B cell (primary cell): ENCODE measurements at regions of chr1 and their contacts with region 1.

Region 1: DNA sequence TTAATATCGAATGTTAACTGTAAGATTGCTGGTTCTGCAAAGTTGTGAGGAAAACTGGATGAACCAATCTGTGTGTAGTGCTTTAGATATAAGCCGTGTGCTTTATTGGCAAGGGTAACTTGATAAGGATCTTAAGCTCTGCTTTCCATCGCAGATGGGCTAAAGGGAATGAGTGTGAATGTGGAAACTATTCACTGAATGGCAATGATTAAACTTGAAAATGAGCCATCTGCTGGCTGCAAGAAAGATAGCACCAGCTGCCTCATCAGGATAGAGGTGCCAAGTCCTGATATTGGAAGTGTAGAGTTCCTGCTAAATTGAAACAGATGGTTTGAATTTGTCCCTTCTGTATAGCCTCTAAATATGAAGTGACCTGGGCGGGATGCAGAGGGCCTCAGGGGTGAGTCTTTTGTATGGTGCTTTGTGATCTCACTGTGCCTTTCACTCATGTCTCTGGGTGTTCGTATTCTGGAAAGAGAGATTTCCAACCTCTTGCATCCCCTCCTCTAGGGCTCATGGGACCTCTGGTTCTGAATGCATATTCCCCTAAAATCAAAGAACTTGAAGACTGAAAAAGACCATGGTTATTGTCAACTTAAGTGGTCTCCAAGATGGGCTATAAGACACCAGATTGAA is 9.2 kb downstream of the FCRL3 start:
- DNase-seq: peak; percentile 51
- ATAC-seq: peak; percentile 41
- H3K4me3 ChIP-seq: no peak overlapping the region
- H3K4me3 Mint-ChIP-seq: no peak overlapping the region
- H3K27ac ChIP-seq: peak overlapping the region in 1 of 2 donors; percentile 32
- H3K27ac Mint-ChIP-seq: peak overlapping the region; percentile 54
- H3K4me1 ChIP-seq: peaks cover 40 to 68% of the 10 kb centered on the region in 2 donors
- H3K4me1 Mint-ChIP-seq: peaks cover 77% of the 10 kb centered on the region
- H3K27me3 ChIP-seq: no peaks in the 10 kb centered on the region
- H3K27me3 Mint-ChIP-seq: no peaks in the 10 kb centered on the region
- CTCF ChIP-seq: peak; percentile 73

Region 2: DNA sequence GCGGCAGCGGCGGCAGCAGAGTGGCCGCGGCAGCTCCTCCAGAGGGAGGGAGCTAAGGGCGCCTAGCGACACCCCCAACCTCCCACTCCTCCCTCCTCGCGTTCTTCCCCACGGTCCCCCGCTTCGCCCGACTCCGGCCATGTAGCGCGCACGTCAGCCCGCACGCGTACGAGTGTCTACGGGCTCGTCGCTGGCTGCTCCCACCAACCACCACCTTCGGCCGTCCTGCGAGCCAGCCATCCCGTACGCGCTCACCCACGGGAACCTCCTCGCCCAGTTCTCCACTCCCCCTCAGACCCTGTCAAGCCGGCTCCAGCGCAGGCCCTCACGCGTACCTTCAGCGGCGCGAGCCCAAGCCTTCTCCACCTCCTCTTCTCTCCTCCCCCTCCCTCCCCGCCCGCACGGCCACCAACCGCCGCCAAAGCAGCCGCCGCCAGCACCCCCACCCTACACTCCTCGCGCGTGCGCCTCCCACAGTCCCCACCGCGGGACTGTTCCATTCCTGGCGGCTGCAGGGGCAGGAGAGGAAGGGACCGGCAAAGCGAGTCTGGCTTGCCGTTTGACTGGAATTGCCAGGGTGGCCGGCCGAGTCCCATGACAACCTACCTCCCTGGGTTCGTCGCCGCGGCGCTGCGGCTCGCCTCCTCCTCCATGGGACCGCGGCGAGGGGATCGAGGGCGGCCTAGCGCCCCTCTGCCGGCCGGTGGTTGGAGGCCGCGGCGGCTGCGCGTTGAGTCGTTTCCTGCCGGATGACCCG is 2002.9 kb before region 1 on chr1 and contains the start of gene YY1AP1:
- CTCF ChIA-PET with region 1: no interaction called
- POLR2A ChIA-PET with region 1: no interaction called
- intact Hi-C with region 1: no loop called
- DNase-seq: peak; percentile 96
- ATAC-seq: peak; percentile 85
- H3K4me3 ChIP-seq: peak within 1 kb of the TSS; percentile 80 to 97 (median 95)
- H3K4me3 Mint-ChIP-seq: peak within 1 kb of the TSS; percentile 97
- H3K27ac ChIP-seq: peak within 1 kb of the TSS; percentile 72 to 97
- H3K27ac Mint-ChIP-seq: peak within 1 kb of the TSS; percentile 97
- H3K4me1 ChIP-seq: peaks cover 16 to 19% of the 10 kb centered on the region in 2 donors
- H3K4me1 Mint-ChIP-seq: peaks cover 52% of the 10 kb centered on the region
- H3K27me3 ChIP-seq: no peaks in the 10 kb centered on the region
- H3K27me3 Mint-ChIP-seq: no peaks in the 10 kb centered on the region
- CTCF ChIP-seq: no peak
- total RNA-seq, gene YY1AP1: 132 and 156 TPM in 2 replicates

Region 3: DNA sequence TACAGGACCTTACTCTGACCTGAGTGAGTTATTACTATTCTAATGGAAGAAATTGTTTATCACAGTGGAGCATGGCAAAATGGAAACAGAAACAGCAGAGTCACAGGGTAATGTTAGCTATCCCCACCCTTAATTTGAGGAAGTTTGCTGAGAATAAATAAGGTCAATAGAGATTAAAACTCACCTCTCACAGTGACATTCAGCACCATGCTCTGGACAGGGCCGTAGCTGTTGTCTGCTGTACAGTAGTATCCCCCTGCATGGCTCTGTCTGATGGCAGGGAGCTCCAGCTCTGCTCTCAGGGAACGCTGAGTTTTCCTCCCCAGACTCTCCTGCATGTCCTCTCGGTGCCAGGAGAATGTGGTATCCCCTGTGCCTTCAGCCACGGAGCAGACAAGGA is 105.4 kb before region 1 on chr1:
- CTCF ChIA-PET with region 1: interaction called, 130 read pairs
- POLR2A ChIA-PET with region 1: no interaction called
- intact Hi-C with region 1: no loop called
- DNase-seq: peak; percentile 62
- ATAC-seq: peak; percentile 68
- H3K4me3 ChIP-seq: no peak overlapping the region
- H3K4me3 Mint-ChIP-seq: peak overlapping the region; percentile 67
- H3K27ac ChIP-seq: no peak overlapping the region
- H3K27ac Mint-ChIP-seq: peak overlapping the region; percentile 60
- H3K4me1 ChIP-seq: peaks cover 42 to 43% of the 10 kb centered on the region in 2 donors
- H3K4me1 Mint-ChIP-seq: peaks cover 53% of the 10 kb centered on the region
- H3K27me3 ChIP-seq: peaks cover 0 to 9% (median 0%) of the 10 kb centered on the region in 4 experiments
- H3K27me3 Mint-ChIP-seq: no peaks in the 10 kb centered on the region
- CTCF ChIP-seq: no peak

Region 4: DNA sequence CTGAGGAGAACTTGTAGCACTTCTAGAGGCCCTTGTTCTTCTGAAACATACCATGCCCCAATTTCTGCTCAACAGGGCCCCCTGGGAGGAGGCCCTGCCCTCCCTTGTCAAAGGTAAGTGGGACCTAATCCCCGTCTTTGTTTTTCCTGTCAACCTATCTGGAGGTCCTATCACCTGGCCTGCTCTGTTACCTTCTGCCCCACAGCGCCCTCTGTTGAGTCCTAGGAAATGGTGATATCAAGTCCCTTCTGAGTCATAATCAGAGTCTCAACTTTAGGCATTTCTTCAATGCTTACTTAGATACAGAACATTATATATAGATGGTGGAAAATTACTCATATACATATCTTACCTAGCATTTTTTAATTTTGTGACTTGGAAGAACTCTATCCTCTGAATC is 65.3 kb before region 1 on chr1:
- CTCF ChIA-PET with region 1: interaction called, 15 read pairs
- POLR2A ChIA-PET with region 1: no interaction called
- intact Hi-C with region 1: loop called (anchors 2 kb)
- DNase-seq: peak; percentile 72
- ATAC-seq: peak; percentile 49
- H3K4me3 ChIP-seq: no peak overlapping the region
- H3K4me3 Mint-ChIP-seq: no peak overlapping the region
- H3K27ac ChIP-seq: no peak overlapping the region
- H3K27ac Mint-ChIP-seq: no peak overlapping the region
- H3K4me1 ChIP-seq: peaks cover 4 to 6% of the 10 kb centered on the region in 2 donors
- H3K4me1 Mint-ChIP-seq: peaks cover 13% of the 10 kb centered on the region
- H3K27me3 ChIP-seq: no peaks in the 10 kb centered on the region
- H3K27me3 Mint-ChIP-seq: no peaks in the 10 kb centered on the region
- CTCF ChIP-seq: peak; percentile 75

Region 5: GRCh38 chr1:157704878-157705277 is 13.5 kb after region 1 on chr1:
- CTCF ChIA-PET with region 1: interaction called, 31 read pairs
- POLR2A ChIA-PET with region 1: no interaction called
- intact Hi-C with region 1: loop called (anchors 2 kb)
- DNase-seq: peak; percentile 72
- ATAC-seq: peak; percentile 80
- H3K4me3 ChIP-seq: no peak overlapping the region
- H3K4me3 Mint-ChIP-seq: peak overlapping the region; percentile 68
- H3K27ac ChIP-seq: peak overlapping the region; percentile 24 to 76
- H3K27ac Mint-ChIP-seq: peak overlapping the region; percentile 90
- H3K4me1 ChIP-seq: peaks cover 84 to 87% of the 10 kb centered on the region in 2 donors
- H3K4me1 Mint-ChIP-seq: peaks cover 94% of the 10 kb centered on the region
- H3K27me3 ChIP-seq: no peaks in the 10 kb centered on the region
- H3K27me3 Mint-ChIP-seq: no peaks in the 10 kb centered on the region
- CTCF ChIP-seq: no peak

Region 6: GRCh38 chr1:157751283-157751682 is 59.9 kb after region 1 on chr1:
- CTCF ChIA-PET with region 1: interaction called, 17 read pairs
- POLR2A ChIA-PET with region 1: no interaction called
- intact Hi-C with region 1: no loop called
- DNase-seq: no peak
- ATAC-seq: no peak
- H3K4me3 ChIP-seq: no peak overlapping the region
- H3K4me3 Mint-ChIP-seq: no peak overlapping the region
- H3K27ac ChIP-seq: peak overlapping the region in 1 of 2 donors; percentile 9
- H3K27ac Mint-ChIP-seq: peak overlapping the region; percentile 72
- H3K4me1 ChIP-seq: peaks cover 12 to 16% of the 10 kb centered on the region in 2 donors
- H3K4me1 Mint-ChIP-seq: peaks cover 41% of the 10 kb centered on the region
- H3K27me3 ChIP-seq: no peaks in the 10 kb centered on the region
- H3K27me3 Mint-ChIP-seq: no peaks in the 10 kb centered on the region
- CTCF ChIP-seq: peak; percentile 8

Region 7: DNA sequence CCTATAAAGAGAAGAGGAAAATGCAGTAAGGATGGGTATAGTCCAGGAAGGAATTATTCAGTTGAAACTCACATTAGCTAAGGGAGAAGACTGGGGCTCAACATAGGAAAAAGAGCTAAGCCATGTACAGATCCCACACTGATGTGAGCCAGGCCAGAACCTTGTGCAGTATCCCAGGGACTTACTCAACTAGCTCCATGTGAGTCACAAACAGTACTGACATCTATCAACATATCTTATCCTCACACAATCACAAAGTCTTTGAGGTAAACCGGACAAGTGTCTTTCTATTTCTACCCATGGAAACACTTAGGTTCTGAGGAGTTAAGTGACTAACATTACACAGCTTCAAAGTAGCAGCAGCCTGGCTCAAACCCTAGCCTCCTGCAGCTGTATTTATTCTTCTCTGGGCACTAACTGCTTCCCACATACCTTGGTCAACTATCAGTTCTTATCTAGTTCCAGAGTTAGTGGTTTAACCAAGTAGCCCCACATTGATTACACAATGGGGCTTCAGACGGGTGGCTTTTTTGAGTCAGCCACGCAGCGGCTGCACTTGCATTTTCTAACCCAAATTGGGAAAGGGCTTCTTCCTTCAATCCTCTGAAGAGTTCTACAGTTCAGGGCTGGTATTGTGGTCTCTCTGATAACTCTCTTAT is 140.7 kb after region 1 on chr1:
- CTCF ChIA-PET with region 1: no interaction called
- POLR2A ChIA-PET with region 1: no interaction called
- intact Hi-C with region 1: no loop called
- DNase-seq: no peak
- ATAC-seq: no peak
- H3K4me3 ChIP-seq: no peak overlapping the region
- H3K4me3 Mint-ChIP-seq: peak overlapping the region; percentile 13
- H3K27ac ChIP-seq: no peak overlapping the region
- H3K27ac Mint-ChIP-seq: peak overlapping the region; percentile 26
- H3K4me1 ChIP-seq: peaks cover 28 to 31% of the 10 kb centered on the region in 2 donors
- H3K4me1 Mint-ChIP-seq: peaks cover 52% of the 10 kb centered on the region
- H3K27me3 ChIP-seq: no peaks in the 10 kb centered on the region
- H3K27me3 Mint-ChIP-seq: no peaks in the 10 kb centered on the region
- CTCF ChIP-seq: no peak